ENCODE measurements at regions of chr11 and their contacts with region 1.

Region 1: DNA sequence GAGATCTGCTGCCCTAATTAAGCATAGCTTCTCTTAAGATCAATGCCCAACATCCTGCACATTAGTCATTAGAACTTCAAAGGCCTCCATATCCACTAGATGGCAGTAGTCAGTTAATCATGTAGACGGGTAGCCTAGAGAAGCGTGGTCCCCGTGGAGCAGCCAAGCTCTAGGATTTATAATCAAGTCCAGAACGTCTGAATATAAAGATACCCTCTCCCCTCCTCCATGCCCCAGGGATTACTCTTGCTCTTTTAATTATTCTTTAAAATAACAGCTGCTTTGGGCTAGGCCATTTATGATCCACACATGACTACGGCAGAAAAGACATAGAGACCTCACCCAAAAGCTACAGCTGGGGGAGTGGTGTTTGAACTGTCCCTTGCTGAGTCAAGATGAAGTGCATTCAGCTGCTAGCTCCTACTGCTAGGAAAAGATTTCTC is 327.6 kb upstream of the PLET1 start:
- DNase-seq: peak in 1 of 2 experiments; percentile 19
- H3K4me3 ChIP-seq: no peak overlapping the region
- H3K27ac ChIP-seq: no peak overlapping the region
- H3K4me1 ChIP-seq: peaks cover 0 to 4% (median 1%) of the 10 kb centered on the region in 4 experiments; a peak in 1 of 7 replicates
- H3K27me3 ChIP-seq: no peaks in the 10 kb centered on the region
- CTCF ChIP-seq: peak in 2 of 3 experiments; percentile 73 to 74; a peak in 3 of 4 replicates
- EP300 ChIP-seq: no peak
- POLR2A ChIP-seq: no peak
- RAD21 ChIP-seq: peak; percentile 88 to 93

Region 2: GRCh38 chr11:112219476-112220232 is 368.6 kb before region 1 on chr11:
- CTCF ChIA-PET with region 1: interaction called, 22 read pairs
- POLR2A ChIA-PET with region 1: no interaction called
- DNase-seq: no peak
- H3K4me3 ChIP-seq: no peak overlapping the region
- H3K27ac ChIP-seq: no peak overlapping the region; the same call in 1 of the 2 replicates
- H3K4me1 ChIP-seq: no peaks in the 10 kb centered on the region
- H3K27me3 ChIP-seq: 0 out of 7 replicates have a peak, but pooled peaks cover 0 to 4% (median under 1%) of the 10 kb centered on the region in 4 experiments
- CTCF ChIP-seq: peak in 2 of 3 experiments; percentile 71 to 79; a peak in 3 of 4 replicates
- EP300 ChIP-seq: no peak
- POLR2A ChIP-seq: no peak
- RAD21 ChIP-seq: peak; percentile 93 to 94

Region 3: GRCh38 chr11:112408517-112408916 is 179.8 kb before region 1 on chr11:
- CTCF ChIA-PET with region 1: no interaction called
- POLR2A ChIA-PET with region 1: no interaction called
- DNase-seq: peak; percentile 17 to 51
- H3K4me3 ChIP-seq: no peak overlapping the region
- H3K27ac ChIP-seq: no peak overlapping the region
- H3K4me1 ChIP-seq: peaks cover 3 to 13% (median 9%) of the 10 kb centered on the region in 4 experiments; a peak in 5 of 7 replicates
- H3K27me3 ChIP-seq: peaks cover 0 to 2% (median 0%) of the 10 kb centered on the region in 4 experiments; a peak in 1 of 7 replicates
- CTCF ChIP-seq: no peak
- EP300 ChIP-seq: no peak
- POLR2A ChIP-seq: no peak
- RAD21 ChIP-seq: no peak

Region 4: DNA sequence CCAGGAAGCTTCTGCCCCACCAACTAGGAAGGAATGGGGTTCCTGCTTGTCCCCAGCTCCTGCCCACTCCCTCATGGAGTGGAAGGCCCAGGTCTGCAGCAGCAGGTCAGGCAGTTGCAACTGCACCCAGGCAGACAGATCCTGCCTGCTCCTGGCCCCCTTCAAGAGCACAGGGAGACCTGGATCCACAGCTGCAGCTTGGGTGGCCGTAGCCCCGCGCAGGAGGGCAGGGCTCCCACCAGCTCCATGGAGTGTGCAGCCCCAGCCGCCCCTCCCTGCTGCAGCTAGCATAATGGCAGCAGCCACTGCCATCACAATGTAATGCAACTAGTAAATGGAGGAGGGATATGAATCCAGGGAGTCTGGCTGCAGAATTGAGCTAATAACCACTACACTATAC is 140.1 kb before region 1 on chr11:
- CTCF ChIA-PET with region 1: interaction called, 33 read pairs
- POLR2A ChIA-PET with region 1: no interaction called
- DNase-seq: no peak
- H3K4me3 ChIP-seq: no peak overlapping the region
- H3K27ac ChIP-seq: no peak overlapping the region
- H3K4me1 ChIP-seq: no peaks in the 10 kb centered on the region
- H3K27me3 ChIP-seq: peaks cover 0 to 1% (median 0%) of the 10 kb centered on the region in 4 experiments; a peak in 2 of 7 replicates
- CTCF ChIP-seq: no peak
- EP300 ChIP-seq: no peak
- POLR2A ChIP-seq: no peak
- RAD21 ChIP-seq: no peak

Region 5: DNA sequence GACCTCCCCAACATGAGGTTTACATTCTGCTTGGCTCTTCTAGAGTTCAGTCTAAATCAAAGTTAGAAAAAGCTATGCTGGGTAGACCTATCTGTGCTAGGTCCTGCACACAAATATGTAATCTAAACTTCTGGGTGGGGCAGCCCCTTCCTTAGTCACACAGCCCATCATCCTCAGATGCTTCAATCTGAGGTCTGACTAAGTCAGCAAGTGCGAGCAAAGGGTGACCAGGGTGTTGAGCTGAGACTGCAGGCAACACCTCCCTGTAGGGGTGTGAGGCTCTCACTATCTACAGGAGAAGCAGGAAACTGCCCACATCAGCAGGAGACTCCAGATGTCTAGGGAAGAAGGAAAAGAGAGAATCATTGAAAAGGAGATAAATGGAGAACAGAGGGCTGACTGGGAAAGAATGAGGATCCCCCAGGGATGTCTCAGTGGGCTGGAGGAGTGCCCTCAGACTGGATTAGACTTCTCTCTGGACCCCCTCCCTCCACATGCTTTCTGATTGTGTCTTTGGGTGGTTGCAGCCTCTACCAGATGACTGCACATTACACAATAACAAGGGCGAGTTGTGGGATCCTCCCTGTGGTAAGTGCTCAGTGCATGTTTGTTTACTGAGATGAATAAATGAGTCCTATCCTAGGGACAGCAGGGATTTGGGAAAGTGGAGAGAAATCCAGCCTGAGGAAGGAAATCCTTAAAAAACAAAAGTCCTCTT is 61.4 kb before region 1 on chr11:
- CTCF ChIA-PET with region 1: no interaction called
- POLR2A ChIA-PET with region 1: no interaction called
- DNase-seq: no peak
- H3K4me3 ChIP-seq: no peak overlapping the region
- H3K27ac ChIP-seq: no peak overlapping the region
- H3K4me1 ChIP-seq: 0 out of 7 replicates have a peak, but pooled peaks cover 0 to 3% (median 0%) of the 10 kb centered on the region in 4 experiments
- H3K27me3 ChIP-seq: 0 out of 7 replicates have a peak, but pooled peaks cover 0 to 2% (median 0%) of the 10 kb centered on the region in 4 experiments
- CTCF ChIP-seq: no peak
- EP300 ChIP-seq: no peak
- POLR2A ChIP-seq: no peak
- RAD21 ChIP-seq: no peak

Region 6: DNA sequence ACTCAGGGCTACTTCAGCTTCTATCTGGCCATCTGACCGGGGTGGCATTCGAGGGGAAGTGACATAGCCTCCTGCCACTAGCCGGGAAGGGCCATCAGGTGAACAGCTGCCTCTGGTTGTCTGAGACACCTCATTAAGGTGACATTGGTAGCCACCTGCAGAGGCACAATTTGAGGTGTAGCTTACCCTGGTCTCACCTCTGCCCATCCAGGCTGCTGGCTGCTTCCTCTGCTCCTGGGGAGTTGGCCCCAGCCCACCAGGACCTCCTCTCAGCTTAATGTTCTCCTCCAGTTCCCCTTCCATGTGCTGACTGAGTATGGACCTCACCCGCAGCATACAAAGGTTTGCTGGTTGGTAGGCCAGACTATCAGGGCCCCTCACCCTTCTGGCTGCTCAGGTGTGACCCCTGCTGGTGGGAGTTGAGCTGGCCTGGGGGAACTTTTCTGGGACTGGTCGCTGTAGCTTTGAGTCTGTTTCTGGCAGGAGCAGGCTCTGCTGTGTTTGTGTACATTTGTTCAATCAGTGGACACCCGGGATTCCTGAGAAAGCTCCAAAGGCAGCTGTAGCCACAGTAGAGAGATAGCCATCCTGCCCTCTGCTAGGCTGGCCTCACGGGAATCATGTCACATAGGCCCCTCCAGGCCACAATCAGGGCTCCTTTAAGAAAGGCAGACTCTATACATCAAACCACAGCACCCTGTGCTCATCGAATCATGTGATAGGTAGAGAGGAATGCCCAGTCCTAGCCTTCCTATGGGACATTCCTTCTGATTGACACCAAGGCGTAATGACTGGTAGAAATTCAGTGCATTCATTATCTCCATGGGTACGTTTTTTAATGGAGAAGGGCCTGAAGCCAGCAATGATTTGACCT is 32.5 kb before region 1 on chr11:
- CTCF ChIA-PET with region 1: interaction called, 15 read pairs
- POLR2A ChIA-PET with region 1: no interaction called
- DNase-seq: peak; percentile 17 to 94
- H3K4me3 ChIP-seq: no peak overlapping the region
- H3K27ac ChIP-seq: no peak overlapping the region
- H3K4me1 ChIP-seq: no peaks in the 10 kb centered on the region; a peak in 1 of 7 replicates
- H3K27me3 ChIP-seq: no peaks in the 10 kb centered on the region
- CTCF ChIP-seq: peak; percentile 85 to 94 (median 89)
- EP300 ChIP-seq: no peak
- POLR2A ChIP-seq: no peak
- RAD21 ChIP-seq: peak; percentile 80 to 82

Region 7: GRCh38 chr11:112744041-112744440 is 155.8 kb after region 1 on chr11:
- CTCF ChIA-PET with region 1: no interaction called
- POLR2A ChIA-PET with region 1: no interaction called
- DNase-seq: no peak
- H3K4me3 ChIP-seq: no peak overlapping the region
- H3K27ac ChIP-seq: no peak overlapping the region
- H3K4me1 ChIP-seq: peaks cover 0 to 3% (median 0%) of the 10 kb centered on the region in 4 experiments; a peak in 1 of 7 replicates
- H3K27me3 ChIP-seq: no peaks in the 10 kb centered on the region
- CTCF ChIP-seq: no peak
- EP300 ChIP-seq: no peak
- POLR2A ChIP-seq: no peak
- RAD21 ChIP-seq: no peak

Region 8: GRCh38 chr11:112760396-112761059 is 172.3 kb after region 1 on chr11:
- CTCF ChIA-PET with region 1: interaction called, 11 read pairs
- POLR2A ChIA-PET with region 1: no interaction called
- DNase-seq: no peak
- H3K4me3 ChIP-seq: no peak overlapping the region
- H3K27ac ChIP-seq: no peak overlapping the region
- H3K4me1 ChIP-seq: no peaks in the 10 kb centered on the region
- H3K27me3 ChIP-seq: no peaks in the 10 kb centered on the region
- CTCF ChIP-seq: no peak
- EP300 ChIP-seq: no peak
- POLR2A ChIP-seq: no peak
- RAD21 ChIP-seq: no peak

Region 9: DNA sequence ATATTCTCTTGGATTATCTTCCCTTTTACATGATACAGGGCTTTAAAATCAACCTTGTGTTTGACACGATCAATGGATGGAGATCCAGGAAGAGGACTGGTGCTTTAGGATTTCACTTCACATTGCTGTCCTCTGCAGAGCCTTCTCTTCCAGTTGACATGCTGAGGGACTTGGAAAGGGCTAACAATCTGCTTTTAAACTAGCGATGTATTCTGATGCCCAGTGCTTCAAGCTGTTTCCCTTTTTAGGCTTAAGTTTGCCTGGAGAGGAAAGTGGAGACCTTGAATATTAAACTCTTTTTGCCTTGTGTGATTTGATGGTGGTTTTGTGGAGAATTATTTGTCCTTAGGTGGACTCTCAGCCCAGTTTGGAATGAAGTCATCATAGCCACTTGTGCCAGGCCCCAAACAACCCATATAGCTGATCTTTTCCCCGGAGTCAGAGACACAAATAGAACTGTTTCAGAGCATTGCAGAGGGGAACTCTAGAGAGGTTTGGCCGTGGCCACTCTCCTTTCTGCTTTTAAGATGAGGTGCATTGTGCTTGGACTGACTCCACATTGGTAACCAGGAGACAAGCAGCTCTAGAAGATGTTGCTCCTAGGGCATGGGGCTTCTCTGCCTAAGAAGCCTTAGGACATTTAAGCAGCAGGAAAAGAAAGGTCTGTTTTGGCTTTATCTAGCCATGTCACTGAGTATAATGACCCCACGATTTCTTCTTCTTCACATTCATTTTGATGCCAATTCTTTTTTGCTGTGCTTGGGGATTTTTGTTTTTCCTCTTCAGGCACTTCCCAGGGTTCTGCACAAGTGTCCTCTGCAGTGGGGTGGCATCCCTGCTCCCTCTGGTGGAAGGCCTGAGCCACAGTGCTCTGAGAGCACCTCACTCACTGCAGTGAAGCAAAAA is 525.8 kb after region 1 on chr11:
- CTCF ChIA-PET with region 1: interaction called, 29 read pairs
- POLR2A ChIA-PET with region 1: no interaction called
- DNase-seq: peak; percentile 13 to 52
- H3K4me3 ChIP-seq: no peak overlapping the region
- H3K27ac ChIP-seq: no peak overlapping the region
- H3K4me1 ChIP-seq: no peaks in the 10 kb centered on the region
- H3K27me3 ChIP-seq: no peaks in the 10 kb centered on the region
- CTCF ChIP-seq: peak; percentile 73 to 82 (median 82)
- EP300 ChIP-seq: no peak
- POLR2A ChIP-seq: no peak
- RAD21 ChIP-seq: peak; percentile 88

Measured in H1 (cell line).